Activated CD8-positive, alpha-beta T cell treated with anti-CD3 and anti-CD28 coated beads, Interleukin-2, amount 10 ng/mL, durations not matched to agents 7 days and 5 days (primary cell): ENCODE measurements at regions of chr19 and their contacts with region 1.

Region 1: DNA sequence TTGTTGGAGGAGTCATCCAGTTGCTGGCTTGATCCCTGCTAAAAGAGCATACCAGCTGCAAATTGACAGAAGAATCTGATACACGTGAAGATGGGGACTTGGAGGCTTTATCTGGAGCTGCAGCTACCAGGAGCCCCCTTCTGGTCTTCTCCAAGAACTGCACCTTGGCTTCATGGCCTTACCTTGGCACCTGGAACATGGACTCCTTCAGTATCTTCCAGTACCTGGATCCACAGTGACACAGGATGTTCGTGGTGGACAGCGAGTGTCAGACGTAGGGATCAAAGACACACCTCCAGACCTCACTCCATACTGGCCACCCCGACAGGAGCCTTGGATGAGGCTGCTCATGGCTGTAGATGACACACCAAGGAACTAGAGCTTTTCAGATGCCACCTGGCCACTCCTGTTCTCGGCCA is 9.9 kb upstream of the ACSBG2 start:
- DNase-seq: peak; percentile 75
- ATAC-seq: peak; percentile 85
- H3K4me3 Mint-ChIP-seq: no peak overlapping the region
- H3K27ac Mint-ChIP-seq: no peak overlapping the region
- H3K4me1 Mint-ChIP-seq: peaks cover 2% of the 10 kb centered on the region
- H3K27me3 Mint-ChIP-seq: peaks cover 2% of the 10 kb centered on the region

Region 2: DNA sequence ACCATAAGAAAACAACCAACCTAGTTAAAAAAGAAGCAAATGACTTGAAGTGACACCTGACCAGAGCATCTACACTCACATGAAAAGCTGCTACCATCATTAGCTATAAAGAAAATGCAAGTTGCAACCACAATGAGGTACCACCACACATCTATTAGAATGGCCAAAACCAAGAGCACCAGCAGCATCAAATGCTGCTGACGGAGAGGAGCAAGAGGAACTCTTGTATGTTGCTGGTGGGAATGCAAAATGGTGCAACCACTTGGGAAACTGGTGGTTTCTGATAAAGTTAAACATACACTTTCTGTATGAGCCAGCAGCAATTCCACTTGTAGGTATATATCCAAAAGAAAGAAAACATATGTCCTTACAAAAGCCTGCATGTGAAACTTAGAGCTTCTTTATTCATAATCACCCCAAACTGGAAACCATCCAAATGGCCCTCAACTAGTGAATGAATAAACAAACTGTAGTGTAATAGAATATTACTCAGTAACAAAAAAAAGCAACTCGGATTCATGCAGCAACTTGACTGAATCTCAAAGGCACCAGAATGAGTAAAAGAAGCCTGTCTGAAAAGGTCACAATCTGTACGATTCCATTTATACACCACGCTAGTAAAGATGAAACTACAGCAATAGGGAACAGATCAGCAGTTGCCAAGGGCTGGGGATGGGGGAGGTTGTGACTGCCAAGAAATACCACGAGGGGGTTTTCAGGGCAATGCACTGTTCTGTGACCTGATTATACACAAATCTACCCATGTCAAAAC is 86.8 kb before region 1 on chr19:
- CTCF ChIA-PET with region 1: interaction called, 20 read pairs
- POLR2A ChIA-PET with region 1: no interaction called
- DNase-seq: no peak
- ATAC-seq: no peak
- H3K4me3 Mint-ChIP-seq: no peak overlapping the region
- H3K27ac Mint-ChIP-seq: no peak overlapping the region
- H3K4me1 Mint-ChIP-seq: peaks cover 12% of the 10 kb centered on the region
- H3K27me3 Mint-ChIP-seq: no peaks in the 10 kb centered on the region

Region 3: GRCh38 chr19:6056801-6057650 is 68.6 kb before region 1 on chr19:
- CTCF ChIA-PET with region 1: interaction called, 34 read pairs
- POLR2A ChIA-PET with region 1: no interaction called
- DNase-seq: no peak
- ATAC-seq: no peak
- H3K4me3 Mint-ChIP-seq: no peak overlapping the region
- H3K27ac Mint-ChIP-seq: no peak overlapping the region
- H3K4me1 Mint-ChIP-seq: peaks cover 28% of the 10 kb centered on the region
- H3K27me3 Mint-ChIP-seq: peaks cover 5% of the 10 kb centered on the region

Region 4: GRCh38 chr19:6110360-6110977 is 15.1 kb before region 1 on chr19 and contains the start of gene RFX2:
- CTCF ChIA-PET with region 1: interaction called, 26 read pairs
- POLR2A ChIA-PET with region 1: interaction called, 4 read pairs
- DNase-seq: peak; percentile 99
- ATAC-seq: peak; percentile 98
- H3K4me3 Mint-ChIP-seq: peak within 1 kb of the TSS; percentile 83
- H3K27ac Mint-ChIP-seq: peak within 1 kb of the TSS; percentile 80
- H3K4me1 Mint-ChIP-seq: peaks cover 25% of the 10 kb centered on the region
- H3K27me3 Mint-ChIP-seq: peaks cover 11% of the 10 kb centered on the region
- total RNA-seq, gene RFX2: 12.3 to 13.8 TPM

Region 5: GRCh38 chr19:6204212-6204611 is 78.6 kb after region 1 on chr19:
- CTCF ChIA-PET with region 1: no interaction called
- POLR2A ChIA-PET with region 1: no interaction called
- DNase-seq: no peak
- ATAC-seq: no peak
- H3K4me3 Mint-ChIP-seq: no peak overlapping the region
- H3K27ac Mint-ChIP-seq: no peak overlapping the region
- H3K4me1 Mint-ChIP-seq: peaks cover 1% of the 10 kb centered on the region
- H3K27me3 Mint-ChIP-seq: no peaks in the 10 kb centered on the region

Region 6: GRCh38 chr19:6297202-6297601 is 171.6 kb after region 1 on chr19:
- CTCF ChIA-PET with region 1: interaction called, 14 read pairs
- POLR2A ChIA-PET with region 1: no interaction called
- DNase-seq: no peak
- ATAC-seq: no peak
- H3K4me3 Mint-ChIP-seq: no peak overlapping the region
- H3K27ac Mint-ChIP-seq: no peak overlapping the region
- H3K4me1 Mint-ChIP-seq: peaks cover 2% of the 10 kb centered on the region
- H3K27me3 Mint-ChIP-seq: no peaks in the 10 kb centered on the region